H1 (cell line): ENCODE measurements at regions of chr5 and their contacts with region 1.

Region 1: GRCh38 chr5:139358064-139358463 is 16.4 kb downstream of the PAIP2 start:
- DNase-seq: no peak
- H3K4me3 ChIP-seq: no peak overlapping the region
- H3K27ac ChIP-seq: no peak overlapping the region
- H3K4me1 ChIP-seq: no peaks in the 10 kb centered on the region
- H3K27me3 ChIP-seq: no peaks in the 10 kb centered on the region
- CTCF ChIP-seq: no peak
- EP300 ChIP-seq: no peak
- POLR2A ChIP-seq: no peak
- RAD21 ChIP-seq: no peak

Region 2: DNA sequence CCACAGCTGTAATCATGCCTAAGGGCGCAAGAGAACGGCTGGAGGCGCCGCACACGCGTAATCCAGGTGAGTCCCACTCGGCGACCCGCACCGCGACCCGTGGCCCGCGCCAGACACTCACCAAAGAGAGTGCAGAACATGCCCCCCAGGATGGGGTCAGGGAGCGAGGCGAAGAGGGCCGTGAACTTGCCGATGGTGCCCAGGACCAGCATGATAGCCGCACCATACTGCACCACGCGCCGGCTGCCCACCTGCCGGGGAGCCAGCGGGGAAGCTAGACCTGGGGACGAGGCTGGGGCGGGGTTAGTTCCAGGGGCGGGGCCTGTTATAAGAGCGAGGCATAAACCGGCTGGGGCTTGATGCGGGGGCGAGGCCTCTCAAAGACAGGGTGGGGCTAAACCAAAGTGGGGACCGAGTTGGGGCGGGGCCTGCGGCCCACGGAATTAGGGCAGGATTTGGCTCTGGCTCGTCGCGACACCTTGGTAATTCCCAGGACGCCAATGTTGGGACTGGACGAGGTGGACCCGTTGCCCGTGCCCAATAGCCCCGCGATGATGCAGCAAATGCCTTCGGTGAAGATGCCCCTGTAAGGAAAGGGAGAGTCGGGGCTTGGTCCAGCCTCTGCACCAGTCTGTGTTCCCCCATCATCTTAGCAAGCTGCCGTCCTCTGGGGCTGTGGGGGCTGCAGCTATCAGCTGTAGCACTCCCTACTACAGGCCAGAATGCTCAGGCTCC is 20.2 kb after region 1 on chr5:
- CTCF ChIA-PET with region 1: interaction called, 4 read pairs
- POLR2A ChIA-PET with region 1: interaction called, 13 read pairs
- DNase-seq: no peak
- H3K4me3 ChIP-seq: no peak overlapping the region
- H3K27ac ChIP-seq: 0 out of 2 replicates have a peak overlapping the region, but pooled peaks have one; percentile 5
- H3K4me1 ChIP-seq: peaks cover 0 to 11% (median 0%) of the 10 kb centered on the region in 4 experiments; a peak in 2 of 7 replicates
- H3K27me3 ChIP-seq: no peaks in the 10 kb centered on the region
- CTCF ChIP-seq: no peak
- EP300 ChIP-seq: no peak
- POLR2A ChIP-seq: no peak
- RAD21 ChIP-seq: no peak